Mammary epithelial cell (primary cell): ENCODE measurements at regions of chr1 and their contacts with region 1.

Region 1: GRCh38 chr1:200896531-200897196 is 2.0 kb downstream of the INAVA start:
- DNase-seq: peak; percentile 90
- H3K4me3 ChIP-seq: peak overlapping the region; percentile 23 to 76 (median 48)
- H3K27ac ChIP-seq: peak overlapping the region; percentile 37
- H3K4me1 ChIP-seq: peaks cover 50% of the 10 kb centered on the region
- H3K27me3 ChIP-seq: no peaks in the 10 kb centered on the region
- CTCF ChIP-seq: no peak

Region 2: GRCh38 chr1:200912737-200913407 is 16.2 kb after region 1 on chr1:
- CTCF ChIA-PET with region 1: no interaction called
- dilution Hi-C with region 1: no loop called
- in situ Hi-C with region 1: no loop called
- intact Hi-C with region 1: loop called (anchors 2 kb)
- DNase-seq: peak; percentile 74
- H3K4me3 ChIP-seq: no peak overlapping the region
- H3K27ac ChIP-seq: no peak overlapping the region
- H3K4me1 ChIP-seq: peaks cover 16% of the 10 kb centered on the region
- H3K27me3 ChIP-seq: no peaks in the 10 kb centered on the region
- CTCF ChIP-seq: no peak